ENCODE measurements at regions of chr15 and their contacts with region 1.

Region 1: GRCh38 chr15:60520825-60521368 is 42.0 kb upstream of the ICE2 start:
- DNase-seq: peak; percentile 70 to 87 (median 84)
- ATAC-seq: peak; percentile 88
- H3K4me3 ChIP-seq: no peak overlapping the region
- H3K4me3 Mint-ChIP-seq: peak overlapping the region; percentile 15
- H3K27ac ChIP-seq: no peak overlapping the region
- H3K27ac Mint-ChIP-seq: peak overlapping the region; percentile 84
- H3K4me1 ChIP-seq: peaks cover 9% of the 10 kb centered on the region
- H3K4me1 Mint-ChIP-seq: peaks cover 63% of the 10 kb centered on the region
- H3K27me3 ChIP-seq: no peaks in the 10 kb centered on the region
- H3K27me3 Mint-ChIP-seq: no peaks in the 10 kb centered on the region
- CTCF ChIP-seq: peak; percentile 94

Region 2: GRCh38 chr15:60464836-60465630 is 55.9 kb before region 1 on chr15:
- CTCF ChIA-PET with region 1: no interaction called
- POLR2A ChIA-PET with region 1: no interaction called
- intact Hi-C with region 1: no loop called
- DNase-seq: no peak
- ATAC-seq: no peak
- H3K4me3 ChIP-seq: no peak overlapping the region
- H3K4me3 Mint-ChIP-seq: no peak overlapping the region
- H3K27ac ChIP-seq: no peak overlapping the region
- H3K27ac Mint-ChIP-seq: no peak overlapping the region
- H3K4me1 ChIP-seq: no peaks in the 10 kb centered on the region
- H3K4me1 Mint-ChIP-seq: peaks cover 5% of the 10 kb centered on the region
- H3K27me3 ChIP-seq: no peaks in the 10 kb centered on the region
- H3K27me3 Mint-ChIP-seq: no peaks in the 10 kb centered on the region
- CTCF ChIP-seq: no peak

Region 3: DNA sequence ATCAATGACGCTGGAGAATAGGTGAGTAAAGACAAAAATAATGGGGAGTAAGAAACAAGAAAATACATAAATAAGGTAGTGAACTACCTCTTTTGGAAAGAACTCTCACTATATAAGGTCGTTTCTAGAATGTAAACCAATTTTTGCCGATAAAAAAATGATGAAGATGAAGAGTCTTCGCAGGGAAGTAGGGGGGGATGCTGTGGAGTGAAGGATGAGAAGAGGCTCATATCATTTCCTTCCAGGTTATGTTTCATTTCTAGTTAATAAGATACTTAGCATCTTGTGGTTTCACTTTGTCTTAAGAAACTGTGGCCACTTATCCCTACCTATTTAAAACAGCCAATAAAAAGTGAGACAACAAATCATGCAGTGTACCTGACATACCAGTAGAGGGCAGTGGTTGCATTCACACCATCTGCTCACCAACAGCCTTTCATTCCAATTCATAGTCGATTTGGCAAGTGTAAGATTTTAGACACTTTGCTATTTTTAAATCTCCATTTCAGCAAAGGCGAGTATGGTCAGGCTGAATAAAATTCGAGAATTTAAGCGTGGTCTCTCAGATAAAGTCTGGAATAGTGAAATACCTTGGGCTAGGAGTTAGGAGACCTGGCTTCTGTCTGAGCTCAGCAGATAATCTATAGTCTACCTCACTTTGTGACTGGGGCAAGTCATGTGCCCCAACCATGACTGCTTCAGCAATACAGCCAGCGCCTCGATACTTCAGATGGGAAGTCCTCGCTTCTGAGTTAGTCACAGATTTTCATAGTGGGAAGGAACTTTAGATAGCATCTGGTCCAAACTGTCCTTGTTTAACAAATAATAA is 13.1 kb before region 1 on chr15:
- CTCF ChIA-PET with region 1: interaction called, 101 read pairs
- POLR2A ChIA-PET with region 1: interaction called, 3 read pairs
- intact Hi-C with region 1: loop called (anchors 1 kb)
- DNase-seq: peak in 8 of 9 experiments; percentile 18 to 89 (median 52)
- ATAC-seq: peak; percentile 83
- H3K4me3 ChIP-seq: no peak overlapping the region
- H3K4me3 Mint-ChIP-seq: no peak overlapping the region
- H3K27ac ChIP-seq: peak overlapping the region in 1 of 2 experiments; percentile 52
- H3K27ac Mint-ChIP-seq: peak overlapping the region; percentile 47
- H3K4me1 ChIP-seq: peaks cover 33% of the 10 kb centered on the region
- H3K4me1 Mint-ChIP-seq: peaks cover 52% of the 10 kb centered on the region
- H3K27me3 ChIP-seq: no peaks in the 10 kb centered on the region
- H3K27me3 Mint-ChIP-seq: no peaks in the 10 kb centered on the region
- CTCF ChIP-seq: peak; percentile 86

Region 4: GRCh38 chr15:60548101-60548500 is 27.2 kb after region 1 on chr15:
- CTCF ChIA-PET with region 1: interaction called, 50 read pairs
- POLR2A ChIA-PET with region 1: interaction called, 6 read pairs
- intact Hi-C with region 1: no loop called
- DNase-seq: peak in 5 of 9 experiments; percentile 38 to 71 (median 48)
- ATAC-seq: peak; percentile 67
- H3K4me3 ChIP-seq: peak overlapping the region in 1 of 2 experiments; percentile 0
- H3K4me3 Mint-ChIP-seq: peak overlapping the region; percentile 57
- H3K27ac ChIP-seq: peak overlapping the region in 1 of 2 experiments; percentile 84
- H3K27ac Mint-ChIP-seq: peak overlapping the region; percentile 89
- H3K4me1 ChIP-seq: peaks cover 90% of the 10 kb centered on the region
- H3K4me1 Mint-ChIP-seq: peaks cover 92% of the 10 kb centered on the region
- H3K27me3 ChIP-seq: no peaks in the 10 kb centered on the region
- H3K27me3 Mint-ChIP-seq: no peaks in the 10 kb centered on the region
- CTCF ChIP-seq: no peak

Region 5: DNA sequence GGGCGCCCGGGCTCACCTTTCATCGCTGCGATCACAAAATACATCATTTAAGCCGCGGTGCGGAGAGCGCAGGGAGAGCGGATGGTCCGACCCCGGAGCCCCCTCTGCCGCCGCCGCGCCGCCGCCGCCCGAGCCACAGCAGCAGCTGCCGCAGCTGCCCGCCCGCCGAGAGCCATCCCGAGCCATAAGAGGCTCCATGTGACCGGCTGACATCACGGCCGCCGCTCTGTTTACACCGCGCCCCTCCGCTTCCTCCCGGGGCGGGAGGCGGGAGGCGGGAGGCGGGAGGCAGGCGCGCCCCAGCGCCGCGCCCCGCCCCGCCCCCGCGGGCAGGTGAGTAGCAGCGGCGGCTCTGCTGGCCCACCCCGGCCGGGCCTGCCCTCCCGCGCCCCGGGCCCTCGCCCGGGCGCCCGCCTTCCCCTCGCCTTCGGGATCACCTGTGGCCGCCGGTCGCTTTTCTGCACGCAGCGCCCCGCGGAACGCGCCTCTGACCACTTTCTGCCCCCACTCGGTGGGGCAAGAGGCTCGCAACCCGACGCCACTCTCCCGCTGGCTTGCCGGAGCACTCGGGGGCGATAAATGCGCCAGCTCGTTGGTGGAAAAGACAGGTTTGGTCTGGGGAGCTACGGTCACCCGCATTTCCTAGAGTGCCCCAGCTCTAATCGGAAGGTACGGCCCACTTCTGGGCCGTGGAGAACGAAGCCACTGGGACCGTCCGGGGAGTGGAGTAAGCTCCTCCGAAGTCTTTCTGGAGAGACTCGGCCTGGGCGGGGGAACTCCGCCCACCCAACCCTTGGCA is 71.7 kb after region 1 on chr15:
- CTCF ChIA-PET with region 1: interaction called, 13 read pairs
- POLR2A ChIA-PET with region 1: no interaction called
- intact Hi-C with region 1: loop called in 1 of 2 experiments (anchors 5 kb)
- DNase-seq: peak; percentile 71 to 93 (median 87)
- ATAC-seq: peak; percentile 88
- H3K4me3 ChIP-seq: peak overlapping the region; percentile 71 to 81
- H3K4me3 Mint-ChIP-seq: peak overlapping the region; percentile 84
- H3K27ac ChIP-seq: peak overlapping the region; percentile 75 to 83
- H3K27ac Mint-ChIP-seq: peak overlapping the region; percentile 88
- H3K4me1 ChIP-seq: peaks cover 33% of the 10 kb centered on the region
- H3K4me1 Mint-ChIP-seq: peaks cover 35% of the 10 kb centered on the region
- H3K27me3 ChIP-seq: no peaks in the 10 kb centered on the region
- H3K27me3 Mint-ChIP-seq: no peaks in the 10 kb centered on the region
- CTCF ChIP-seq: no peak

Region 6: GRCh38 chr15:60795889-60796288 is 275.0 kb after region 1 on chr15:
- CTCF ChIA-PET with region 1: no interaction called
- POLR2A ChIA-PET with region 1: no interaction called
- intact Hi-C with region 1: no loop called
- DNase-seq: peak in 1 of 9 experiments; percentile 28
- ATAC-seq: no peak
- H3K4me3 ChIP-seq: no peak overlapping the region
- H3K4me3 Mint-ChIP-seq: no peak overlapping the region
- H3K27ac ChIP-seq: peak overlapping the region in 1 of 2 experiments; percentile 58
- H3K27ac Mint-ChIP-seq: peak overlapping the region; percentile 66
- H3K4me1 ChIP-seq: peaks cover 30% of the 10 kb centered on the region
- H3K4me1 Mint-ChIP-seq: peaks cover 53% of the 10 kb centered on the region
- H3K27me3 ChIP-seq: no peaks in the 10 kb centered on the region
- H3K27me3 Mint-ChIP-seq: no peaks in the 10 kb centered on the region
- CTCF ChIP-seq: no peak

Region 7: DNA sequence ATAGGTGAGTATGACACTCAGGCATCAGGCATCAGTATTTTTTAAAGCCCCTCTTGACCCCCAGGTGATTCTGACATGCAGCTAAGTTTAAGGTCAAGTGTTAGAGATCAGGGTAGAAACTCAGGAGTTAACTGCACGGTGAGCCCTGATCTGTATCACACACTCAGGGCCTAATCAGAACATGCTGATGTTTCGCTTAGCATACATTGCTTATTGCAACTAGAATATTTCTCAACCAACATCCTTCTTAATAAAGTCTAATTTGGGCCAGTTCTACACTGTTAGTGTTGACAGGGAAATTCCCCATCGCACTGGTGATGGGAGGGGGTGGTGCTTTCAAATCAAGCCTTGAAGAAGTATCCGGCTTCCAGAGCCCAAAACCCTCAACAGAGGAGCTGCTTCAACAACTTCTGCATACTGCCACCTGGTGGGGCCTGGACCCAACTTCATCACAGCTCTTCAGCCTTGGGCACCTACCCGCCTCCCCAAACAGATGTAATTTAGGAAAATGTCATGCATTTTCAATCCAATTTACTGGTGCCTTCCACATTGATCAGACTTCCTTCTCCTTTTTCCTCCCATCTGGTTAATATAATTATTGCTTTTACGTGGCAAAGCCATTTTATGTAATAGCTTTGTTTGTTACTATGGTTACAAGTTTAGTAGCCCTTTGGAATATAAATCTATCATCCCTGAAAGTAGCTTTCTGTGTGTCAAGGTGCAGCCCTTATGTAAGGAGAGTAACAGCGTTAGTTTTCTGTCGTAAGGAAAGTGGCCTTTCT is 396.0 kb after region 1 on chr15:
- CTCF ChIA-PET with region 1: interaction called, 61 read pairs
- POLR2A ChIA-PET with region 1: interaction called, 3 read pairs
- intact Hi-C with region 1: no loop called
- DNase-seq: peak; percentile 70 to 95 (median 88)
- ATAC-seq: peak; percentile 99
- H3K4me3 ChIP-seq: no peak overlapping the region
- H3K4me3 Mint-ChIP-seq: no peak overlapping the region
- H3K27ac ChIP-seq: peak overlapping the region in 1 of 2 experiments; percentile 31
- H3K27ac Mint-ChIP-seq: peak overlapping the region; percentile 72
- H3K4me1 ChIP-seq: peaks cover 8% of the 10 kb centered on the region
- H3K4me1 Mint-ChIP-seq: peaks cover 11% of the 10 kb centered on the region
- H3K27me3 ChIP-seq: no peaks in the 10 kb centered on the region
- H3K27me3 Mint-ChIP-seq: no peaks in the 10 kb centered on the region
- CTCF ChIP-seq: peak; percentile 92

Measured in CD8-positive, alpha-beta T cell (primary cell).